GM12878 (cell line): ENCODE measurements at regions of chrX and their contacts with region 1.

Region 1: GRCh38 chrX:41561045-41561444 is 113.9 kb downstream of the NYX start:
- DNase-seq: peak; percentile 17
- ATAC-seq: peak; percentile 96
- H3K4me3 ChIP-seq: no peak overlapping the region
- H3K27ac ChIP-seq: no peak overlapping the region
- H3K4me1 ChIP-seq: 0 out of 2 replicates have a peak, but pooled peaks cover 2% of the 10 kb centered on the region
- H3K27me3 ChIP-seq: no peaks in the 10 kb centered on the region
- CTCF ChIP-seq: no peak
- EP300 ChIP-seq: 0 out of 4 replicates have a peak, but pooled peaks of 1 of the 2 experiments have one; percentile 41
- POLR2A ChIP-seq: no peak
- RAD21 ChIP-seq: no peak

Region 2: GRCh38 chrX:41759817-41760216 is 198.8 kb after region 1 on chrX:
- CTCF ChIA-PET with region 1: interaction called, 23 read pairs
- POLR2A ChIA-PET with region 1: no interaction called
- RAD21 ChIA-PET with region 1: interaction called, 10 read pairs
- SMC1A ChIA-PET with region 1: interaction called, 10 read pairs
- in situ Hi-C with region 1: no loop called
- intact Hi-C with region 1: loop called (anchors 1 kb)
- DNase-seq: no peak
- ATAC-seq: peak; percentile 72
- H3K4me3 ChIP-seq: no peak overlapping the region
- H3K27ac ChIP-seq: no peak overlapping the region
- H3K4me1 ChIP-seq: no peaks in the 10 kb centered on the region
- H3K27me3 ChIP-seq: no peaks in the 10 kb centered on the region
- CTCF ChIP-seq: peak; percentile 59 to 67 (median 62)
- EP300 ChIP-seq: no peak
- POLR2A ChIP-seq: no peak
- RAD21 ChIP-seq: peak; percentile 93